Left cardiac atrium (tissue), 4 donors: ENCODE measurements at regions of chr7 and their contacts with region 1.

Region 1: DNA sequence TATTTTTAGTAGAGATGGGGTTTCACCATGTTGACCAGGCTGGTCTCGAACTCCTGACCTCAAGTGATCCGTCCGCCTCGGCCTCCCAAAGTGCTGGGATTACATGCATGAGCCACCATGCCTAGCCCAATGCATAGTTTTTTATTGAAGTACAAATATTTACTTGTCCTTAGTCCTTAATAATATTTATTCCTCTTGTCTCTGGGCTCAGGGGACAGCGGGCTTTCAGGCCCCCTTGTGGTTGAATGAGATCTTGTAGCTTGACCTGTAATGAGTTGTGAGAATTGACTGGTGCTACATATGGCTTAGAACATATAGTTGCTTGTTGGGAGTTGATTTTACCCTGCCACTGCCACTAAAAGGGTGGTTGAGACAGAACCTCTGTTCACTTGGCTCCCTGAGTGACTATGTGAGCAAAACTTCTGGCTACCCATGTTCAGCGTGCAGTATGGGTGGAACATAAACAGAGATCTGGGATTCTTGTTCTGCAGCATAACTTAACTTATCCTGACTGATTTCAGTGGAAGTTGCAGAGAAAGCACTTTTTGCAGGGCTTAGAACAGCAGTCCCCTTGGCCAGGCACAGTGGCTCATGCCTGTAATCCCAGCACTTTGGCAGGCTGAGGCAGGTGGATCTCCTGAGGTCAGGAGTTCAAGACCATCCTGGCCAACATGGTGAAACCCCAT is 14.9 kb downstream of the CCL26 start:
- DNase-seq: no peak
- ATAC-seq: no peak

Region 2: GRCh38 chr7:75534727-75535307 is 222.3 kb before region 1 on chr7:
- intact Hi-C with region 1: loop called in 1 of 2 experiments (anchors 10 kb)
- DNase-seq: no peak
- ATAC-seq: peak in 1 of 2 donors; percentile 15

Region 3: GRCh38 chr7:75696263-75697037 is 60.7 kb before region 1 on chr7:
- intact Hi-C with region 1: no loop called
- DNase-seq: no peak
- ATAC-seq: no peak